ENCODE measurements at regions of chr1 and their contacts with region 1.

Region 1: GRCh38 chr1:28736450-28737306 is at the start of gene YTHDF2:
- DNase-seq: peak; percentile 97 to 99 (median 98)
- ATAC-seq: peak; percentile 91
- H3K4me3 ChIP-seq: peak within 1 kb of the TSS; percentile 95
- H3K4me3 Mint-ChIP-seq: peak within 1 kb of the TSS; percentile 98
- H3K27ac ChIP-seq: peak within 1 kb of the TSS; percentile 82 to 89
- H3K27ac Mint-ChIP-seq: peak within 1 kb of the TSS; percentile 92
- H3K4me1 ChIP-seq: peaks cover 32% of the 10 kb centered on the region
- H3K4me1 Mint-ChIP-seq: peaks cover 44% of the 10 kb centered on the region
- H3K27me3 ChIP-seq: no peaks in the 10 kb centered on the region
- H3K27me3 Mint-ChIP-seq: no peaks in the 10 kb centered on the region
- CTCF ChIP-seq: peak; percentile 94
- total RNA-seq, gene YTHDF2: 85.0 to 100 TPM

Region 2: GRCh38 chr1:28329395-28330153 is 407.1 kb before region 1 on chr1:
- CTCF ChIA-PET with region 1: no interaction called
- POLR2A ChIA-PET with region 1: interaction called, 12 read pairs
- intact Hi-C with region 1: loop called in 1 of 2 experiments (anchors 5 kb)
- DNase-seq: peak in 10 of 14 experiments; percentile 17 to 73 (median 36)
- ATAC-seq: peak; percentile 21
- H3K4me3 ChIP-seq: peak overlapping the region; percentile 67
- H3K4me3 Mint-ChIP-seq: peak overlapping the region; percentile 94
- H3K27ac ChIP-seq: peak overlapping the region; percentile 90 to 93
- H3K27ac Mint-ChIP-seq: peak overlapping the region; percentile 88
- H3K4me1 ChIP-seq: peaks cover 25% of the 10 kb centered on the region
- H3K4me1 Mint-ChIP-seq: peaks cover 35% of the 10 kb centered on the region
- H3K27me3 ChIP-seq: no peaks in the 10 kb centered on the region
- H3K27me3 Mint-ChIP-seq: no peaks in the 10 kb centered on the region
- CTCF ChIP-seq: no peak

Region 3: GRCh38 chr1:28581536-28582247 is 155.0 kb before region 1 on chr1:
- CTCF ChIA-PET with region 1: interaction called, 7 read pairs
- POLR2A ChIA-PET with region 1: interaction called, 46 read pairs
- intact Hi-C with region 1: no loop called
- DNase-seq: peak; percentile 85 to 97 (median 92)
- ATAC-seq: peak; percentile 83
- H3K4me3 ChIP-seq: peak overlapping the region; percentile 93
- H3K4me3 Mint-ChIP-seq: peak overlapping the region; percentile 94
- H3K27ac ChIP-seq: peak overlapping the region; percentile 70 to 83
- H3K27ac Mint-ChIP-seq: peak overlapping the region; percentile 81
- H3K4me1 ChIP-seq: peaks cover 39% of the 10 kb centered on the region
- H3K4me1 Mint-ChIP-seq: peaks cover 48% of the 10 kb centered on the region
- H3K27me3 ChIP-seq: no peaks in the 10 kb centered on the region
- H3K27me3 Mint-ChIP-seq: no peaks in the 10 kb centered on the region
- CTCF ChIP-seq: no peak

Region 4: DNA sequence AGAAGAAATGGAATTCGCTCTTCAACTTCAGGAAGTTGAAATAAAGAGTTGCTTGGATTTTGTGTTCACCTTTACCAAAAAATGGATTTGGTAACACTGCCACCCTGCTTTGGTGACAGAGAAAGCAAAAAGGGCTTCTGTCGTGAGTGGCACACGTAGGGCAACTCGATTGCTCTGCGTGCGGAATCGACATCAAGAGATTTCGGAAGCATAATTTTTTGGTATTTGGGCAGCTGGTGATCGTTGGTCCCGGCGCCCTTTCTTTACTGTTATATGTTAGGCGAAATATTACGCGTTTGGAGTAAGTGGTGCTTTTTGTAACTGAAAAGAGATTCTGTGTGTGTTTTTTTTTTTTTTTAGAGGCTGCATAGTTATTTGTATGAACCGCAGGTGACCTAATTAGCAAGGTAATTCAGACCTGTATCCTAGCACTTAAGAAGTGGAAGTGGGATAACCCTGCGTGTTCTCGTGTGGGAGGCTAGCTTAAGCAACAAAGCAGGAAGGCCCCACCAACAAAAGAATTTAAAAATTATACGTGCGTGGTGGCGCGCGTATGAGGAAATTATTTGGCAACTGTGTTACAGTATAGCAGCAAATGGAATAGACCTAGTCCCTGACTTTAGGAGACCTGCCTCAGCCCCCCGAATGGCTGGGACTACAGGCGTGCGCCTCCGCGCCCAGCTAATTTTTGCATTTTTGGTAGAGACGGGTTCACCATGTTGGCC is 88.0 kb before region 1 on chr1 and contains the start of gene RNU11:
- CTCF ChIA-PET with region 1: interaction called, 43 read pairs
- POLR2A ChIA-PET with region 1: interaction called, 172 read pairs
- intact Hi-C with region 1: loop called (anchors 1 kb)
- DNase-seq: peak; percentile 77 to 97 (median 85)
- ATAC-seq: peak; percentile 67
- H3K4me3 ChIP-seq: peak within 1 kb of the TSS; percentile 50
- H3K4me3 Mint-ChIP-seq: peak within 1 kb of the TSS; percentile 78
- H3K27ac ChIP-seq: peak within 1 kb of the TSS; percentile 88 to 93
- H3K27ac Mint-ChIP-seq: peak within 1 kb of the TSS; percentile 96
- H3K4me1 ChIP-seq: peaks cover 36% of the 10 kb centered on the region
- H3K4me1 Mint-ChIP-seq: peaks cover 32% of the 10 kb centered on the region
- H3K27me3 ChIP-seq: no peaks in the 10 kb centered on the region
- H3K27me3 Mint-ChIP-seq: no peaks in the 10 kb centered on the region
- CTCF ChIP-seq: no peak
- total RNA-seq, gene RNU11: not detected

Region 5: DNA sequence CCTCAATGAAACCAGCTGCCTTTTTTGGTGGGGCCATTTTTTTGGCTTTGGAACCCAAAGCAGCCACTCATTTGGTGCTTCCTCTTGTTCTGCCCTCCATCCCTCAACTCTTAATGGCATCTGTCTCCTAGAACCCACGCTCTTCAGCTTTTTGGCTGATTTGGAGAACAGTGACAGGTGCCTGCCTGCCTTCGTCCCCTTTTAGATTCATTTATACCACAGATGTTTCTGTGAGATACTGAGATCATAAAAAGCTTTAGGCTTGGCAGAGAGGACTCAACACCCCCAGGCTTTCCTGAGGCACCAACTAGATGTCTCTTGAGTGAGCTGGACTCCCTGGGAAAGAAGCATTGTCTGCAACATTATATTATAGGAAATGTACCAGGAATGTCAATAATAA is 20.3 kb before region 1 on chr1:
- CTCF ChIA-PET with region 1: interaction called, 10 read pairs
- POLR2A ChIA-PET with region 1: interaction called, 5 read pairs
- intact Hi-C with region 1: no loop called
- DNase-seq: no peak
- ATAC-seq: no peak
- H3K4me3 ChIP-seq: no peak overlapping the region
- H3K4me3 Mint-ChIP-seq: no peak overlapping the region
- H3K27ac ChIP-seq: no peak overlapping the region
- H3K27ac Mint-ChIP-seq: no peak overlapping the region
- H3K4me1 ChIP-seq: no peaks in the 10 kb centered on the region
- H3K4me1 Mint-ChIP-seq: no peaks in the 10 kb centered on the region
- H3K27me3 ChIP-seq: no peaks in the 10 kb centered on the region
- H3K27me3 Mint-ChIP-seq: no peaks in the 10 kb centered on the region
- CTCF ChIP-seq: no peak

Region 6: GRCh38 chr1:28756846-28757245 is 20.2 kb after region 1 on chr1:
- CTCF ChIA-PET with region 1: interaction called, 17 read pairs
- POLR2A ChIA-PET with region 1: interaction called, 7 read pairs
- intact Hi-C with region 1: no loop called
- DNase-seq: peak in 4 of 14 experiments; percentile 17 to 45 (median 28)
- ATAC-seq: peak; percentile 56
- H3K4me3 ChIP-seq: no peak overlapping the region
- H3K4me3 Mint-ChIP-seq: no peak overlapping the region
- H3K27ac ChIP-seq: no peak overlapping the region
- H3K27ac Mint-ChIP-seq: no peak overlapping the region
- H3K4me1 ChIP-seq: peaks cover 29% of the 10 kb centered on the region
- H3K4me1 Mint-ChIP-seq: peaks cover 37% of the 10 kb centered on the region
- H3K27me3 ChIP-seq: no peaks in the 10 kb centered on the region
- H3K27me3 Mint-ChIP-seq: no peaks in the 10 kb centered on the region
- CTCF ChIP-seq: peak; percentile 34

Region 7: DNA sequence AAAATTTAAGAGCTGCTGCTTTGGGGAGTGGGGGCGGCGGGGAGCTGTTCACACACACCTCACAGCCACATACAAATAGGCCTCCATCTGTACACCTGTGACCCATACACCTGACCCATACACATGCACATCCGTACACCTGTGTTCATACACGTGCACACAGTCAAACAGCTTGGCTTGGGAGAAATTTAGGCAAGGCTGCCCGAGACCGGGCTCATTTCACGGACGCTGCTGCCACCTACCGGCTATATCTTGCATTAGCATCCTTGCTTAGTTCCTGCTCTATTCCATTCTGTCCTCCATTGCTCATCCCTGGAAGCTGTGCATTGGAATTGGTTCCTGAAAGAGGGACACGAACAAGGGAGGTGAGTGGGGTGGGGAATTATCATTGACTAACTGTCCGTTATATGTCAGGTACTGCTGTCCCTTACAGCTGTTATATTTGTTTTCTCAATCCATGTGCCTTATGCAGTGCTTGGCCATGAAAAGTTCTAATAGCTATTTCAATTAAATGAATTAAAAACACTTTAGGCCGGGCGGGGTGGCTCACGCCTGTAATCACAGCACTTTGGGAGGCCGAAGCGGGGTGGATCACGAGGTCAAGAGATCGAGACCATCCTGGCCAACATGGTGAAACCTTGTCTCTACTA is 140.6 kb after region 1 on chr1:
- CTCF ChIA-PET with region 1: interaction called, 7 read pairs
- POLR2A ChIA-PET with region 1: no interaction called
- intact Hi-C with region 1: loop called in 1 of 2 experiments (anchors 5 kb)
- DNase-seq: peak; percentile 61 to 88 (median 72)
- ATAC-seq: peak; percentile 84
- H3K4me3 ChIP-seq: no peak overlapping the region
- H3K4me3 Mint-ChIP-seq: no peak overlapping the region
- H3K27ac ChIP-seq: no peak overlapping the region
- H3K27ac Mint-ChIP-seq: no peak overlapping the region
- H3K4me1 ChIP-seq: peaks cover 11% of the 10 kb centered on the region
- H3K4me1 Mint-ChIP-seq: peaks cover 7% of the 10 kb centered on the region
- H3K27me3 ChIP-seq: peaks cover 0 to 2% of the 10 kb centered on the region in 2 experiments
- H3K27me3 Mint-ChIP-seq: no peaks in the 10 kb centered on the region
- CTCF ChIP-seq: peak; percentile 97

Region 8: DNA sequence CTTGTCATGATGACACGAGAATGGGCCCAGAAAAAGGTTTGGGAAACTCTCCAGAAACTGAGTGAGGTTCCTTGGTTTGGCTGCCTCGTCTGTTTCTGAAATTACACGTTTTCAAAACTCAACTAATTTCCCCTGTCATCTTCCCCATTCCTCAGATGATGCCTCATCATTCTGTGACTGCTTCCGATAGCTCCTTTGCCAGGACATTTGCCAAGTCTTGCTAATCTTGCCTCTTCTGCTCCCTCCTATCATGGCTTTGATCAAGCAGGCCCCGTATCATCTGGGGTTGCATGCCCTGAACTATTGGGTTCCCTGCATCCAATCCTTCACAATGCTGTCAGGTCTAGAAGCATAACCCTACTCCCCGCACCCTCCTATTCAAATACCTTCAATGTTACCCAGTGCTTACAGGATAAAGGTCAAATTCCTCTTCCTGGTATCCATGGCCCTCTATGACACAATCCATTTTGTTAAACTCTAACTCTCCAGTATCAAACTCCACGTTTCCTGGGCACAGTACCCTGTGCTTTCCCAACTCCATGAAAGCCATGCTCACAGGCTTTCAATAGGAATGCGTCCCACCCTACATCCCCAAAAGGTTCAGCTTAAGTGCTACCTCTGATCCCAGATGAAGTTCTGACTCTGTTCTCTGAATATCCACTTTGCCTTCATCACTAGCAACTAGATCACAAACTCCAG is 409.2 kb after region 1 on chr1:
- CTCF ChIA-PET with region 1: no interaction called
- POLR2A ChIA-PET with region 1: no interaction called
- intact Hi-C with region 1: no loop called
- DNase-seq: no peak
- ATAC-seq: no peak
- H3K4me3 ChIP-seq: no peak overlapping the region
- H3K4me3 Mint-ChIP-seq: no peak overlapping the region
- H3K27ac ChIP-seq: no peak overlapping the region
- H3K27ac Mint-ChIP-seq: no peak overlapping the region
- H3K4me1 ChIP-seq: no peaks in the 10 kb centered on the region
- H3K4me1 Mint-ChIP-seq: no peaks in the 10 kb centered on the region
- H3K27me3 ChIP-seq: no peaks in the 10 kb centered on the region
- H3K27me3 Mint-ChIP-seq: no peaks in the 10 kb centered on the region
- CTCF ChIP-seq: no peak